Caki2 (cell line): ENCODE measurements at regions of chr7 and their contacts with region 1.

Region 1: DNA sequence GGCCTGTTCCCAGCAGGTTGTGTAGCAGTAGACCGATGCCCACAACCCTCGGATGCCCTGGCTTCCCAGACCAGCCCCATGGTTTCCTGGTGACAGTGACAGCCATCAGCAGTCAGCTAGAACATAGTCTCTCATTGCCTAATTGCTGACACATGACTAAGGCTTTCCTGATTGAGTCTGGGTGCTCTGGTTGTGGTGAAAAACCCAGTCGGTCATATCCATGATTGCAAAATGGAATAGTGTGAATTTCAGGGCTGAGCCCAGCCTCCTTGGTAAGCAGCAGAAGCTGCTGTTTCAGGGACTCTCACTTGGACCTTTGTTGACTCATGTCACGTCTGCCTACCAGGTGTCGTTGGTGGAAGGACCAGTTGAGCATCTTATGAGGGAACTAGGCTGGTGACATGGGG is 36.6 kb downstream of the POR start:
- DNase-seq: peak; percentile 77

Region 2: DNA sequence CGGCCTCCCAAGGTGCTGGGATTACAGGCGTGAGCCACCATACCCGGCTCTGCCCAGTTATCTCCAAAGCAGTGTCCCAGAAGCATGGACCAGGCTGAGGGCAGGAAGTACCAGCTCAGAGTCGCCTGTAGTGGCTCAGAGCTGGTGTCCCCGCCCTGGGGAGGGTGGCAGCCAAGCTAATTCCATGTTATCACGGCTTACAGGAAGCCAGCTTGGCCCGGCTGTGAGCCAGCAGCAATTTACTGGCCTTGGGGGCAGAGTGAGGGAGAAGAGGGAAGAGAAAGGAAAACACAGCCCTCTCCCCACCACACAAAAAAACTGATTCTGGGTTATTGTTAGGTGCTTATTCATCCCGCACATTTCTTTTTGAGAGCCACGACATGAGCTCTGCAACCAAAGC is 300.8 kb before region 1 on chr7:
- in situ Hi-C with region 1: no loop called
- DNase-seq: no peak

Region 3: DNA sequence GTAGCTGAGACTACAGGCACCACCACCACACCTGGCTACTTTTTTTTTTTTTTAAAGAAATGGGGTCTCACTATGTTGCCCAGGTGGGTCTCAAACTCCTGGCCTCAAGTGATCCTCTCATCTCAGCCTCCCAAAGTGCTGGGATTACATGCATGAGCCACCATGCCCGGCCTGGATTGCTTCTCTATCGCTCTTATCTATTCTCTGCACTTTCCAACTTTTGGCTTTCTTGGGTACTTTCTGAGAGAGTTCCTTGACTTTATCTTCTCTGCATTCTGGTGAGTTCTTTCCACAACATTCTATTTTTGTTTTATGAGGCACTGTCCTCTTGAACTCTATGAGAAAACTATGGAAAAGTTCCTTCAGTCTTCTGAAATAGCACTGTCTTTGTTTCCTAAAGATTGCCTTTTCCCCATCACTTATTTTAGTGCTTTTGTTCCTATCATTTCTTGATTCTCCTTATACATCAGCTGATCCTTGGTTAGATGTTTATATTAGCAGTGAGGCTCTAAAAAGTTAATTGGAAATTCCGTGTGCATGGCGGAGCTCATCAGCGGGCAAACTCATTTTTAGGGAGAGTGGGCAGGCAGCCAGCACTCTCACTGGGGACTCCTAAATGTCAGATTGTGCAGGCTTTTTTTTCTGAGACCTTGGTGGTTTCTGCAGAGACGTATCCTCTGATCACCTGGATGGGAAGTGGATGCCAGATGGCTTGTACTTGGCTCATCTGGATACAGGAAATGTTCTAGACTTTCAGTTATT is 256.7 kb before region 1 on chr7:
- in situ Hi-C with region 1: no loop called
- DNase-seq: no peak

Region 4: GRCh38 chr7:75905785-75906604 is 45.5 kb before region 1 on chr7:
- in situ Hi-C with region 1: loop called (anchors 10 kb)
- DNase-seq: no peak